ENCODE measurements at regions of chr10 and their contacts with region 1.

Region 1: GRCh38 chr10:52313933-52314816 is at the start of gene DKK1:
- DNase-seq: peak; percentile 87
- H3K4me3 ChIP-seq: peak within 1 kb of the TSS; percentile 90 to 99 (median 91)
- H3K27ac ChIP-seq: peak within 1 kb of the TSS; percentile 77
- H3K4me1 ChIP-seq: peaks cover 29% of the 10 kb centered on the region
- H3K27me3 ChIP-seq: no peaks in the 10 kb centered on the region
- CTCF ChIP-seq: peak; percentile 64 to 90
- total RNA-seq, gene DKK1: 157 to 161 TPM

Region 2: GRCh38 chr10:52387744-52388143 is 73.6 kb after region 1 on chr10:
- CTCF ChIA-PET with region 1: no interaction called
- dilution Hi-C with region 1: no loop called
- in situ Hi-C with region 1: no loop called
- intact Hi-C with region 1: loop called (anchors 2 kb)
- DNase-seq: peak; percentile 85
- H3K4me3 ChIP-seq: no peak overlapping the region
- H3K27ac ChIP-seq: peak overlapping the region; percentile 30
- H3K4me1 ChIP-seq: peaks cover 35% of the 10 kb centered on the region
- H3K27me3 ChIP-seq: no peaks in the 10 kb centered on the region
- CTCF ChIP-seq: no peak

Region 3: DNA sequence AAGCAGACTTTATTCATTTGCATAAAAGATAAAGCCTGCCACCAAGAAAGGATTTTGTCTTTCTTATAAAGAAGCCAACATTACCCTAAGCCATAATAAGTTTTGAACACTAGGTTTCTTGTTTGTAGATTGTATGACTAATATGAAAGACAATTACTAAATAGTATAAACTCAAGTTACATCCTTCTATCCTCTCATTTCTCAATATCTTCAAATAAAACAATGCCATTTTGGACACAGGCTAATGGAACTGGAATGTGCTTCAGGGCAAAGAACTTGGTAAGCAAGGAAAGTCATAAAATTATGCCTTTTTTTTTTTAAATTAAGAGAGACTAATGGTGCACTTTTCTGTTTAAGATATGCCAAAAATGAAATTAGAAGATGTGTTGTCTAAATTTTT is 137.6 kb after region 1 on chr10:
- CTCF ChIA-PET with region 1: interaction called, 3 read pairs
- dilution Hi-C with region 1: no loop called
- in situ Hi-C with region 1: no loop called
- intact Hi-C with region 1: loop called (anchors 1 kb)
- DNase-seq: peak; percentile 88
- H3K4me3 ChIP-seq: peak overlapping the region in 2 of 3 experiments; percentile 24 to 56
- H3K27ac ChIP-seq: peak overlapping the region; percentile 94
- H3K4me1 ChIP-seq: peaks cover 70% of the 10 kb centered on the region
- H3K27me3 ChIP-seq: no peaks in the 10 kb centered on the region
- CTCF ChIP-seq: no peak

Region 4: DNA sequence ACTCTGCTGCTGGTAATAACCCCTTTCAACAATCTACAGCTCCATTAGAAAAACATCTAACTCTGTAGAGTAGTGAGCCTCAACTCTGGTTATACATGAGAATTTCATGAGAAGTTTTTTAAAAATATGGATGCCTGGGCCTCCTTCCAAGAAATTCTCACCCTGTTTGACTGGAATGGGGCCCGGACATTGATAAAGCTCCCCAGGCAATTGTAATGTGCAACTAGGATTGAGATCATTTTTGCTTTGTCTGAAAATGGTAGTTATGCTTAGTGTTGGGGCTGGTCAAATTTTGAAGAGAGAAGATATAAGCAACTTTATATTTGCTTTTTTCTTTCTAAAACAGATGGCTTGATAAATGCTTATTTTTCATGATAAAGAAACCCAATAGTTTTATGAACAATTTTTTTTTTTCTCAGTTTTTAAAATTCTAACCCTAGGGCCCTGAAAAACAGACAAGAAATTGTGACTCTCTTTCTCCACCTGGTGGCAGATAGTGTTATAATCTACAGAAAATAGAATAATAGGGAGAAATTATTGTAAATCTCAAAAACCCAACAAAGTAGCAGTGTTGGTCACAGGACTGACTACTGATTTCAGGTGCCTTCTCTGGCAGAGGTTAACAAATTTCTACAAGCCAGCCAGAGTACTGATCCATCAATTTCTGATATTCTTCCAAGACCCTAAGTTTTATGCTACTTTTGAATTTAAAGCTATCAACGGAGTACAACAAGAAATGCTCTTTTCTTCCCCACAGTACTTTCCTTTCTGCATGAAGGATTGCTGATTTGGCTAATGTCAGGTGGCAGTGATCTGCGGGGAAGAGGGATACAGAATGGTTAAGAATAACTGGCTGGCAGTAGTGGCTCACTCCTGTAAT is 174.7 kb after region 1 on chr10:
- CTCF ChIA-PET with region 1: interaction called, 16 read pairs
- dilution Hi-C with region 1: no loop called
- in situ Hi-C with region 1: loop called (anchors 5 kb)
- intact Hi-C with region 1: loop called (anchors 1 kb)
- DNase-seq: peak; percentile 36
- H3K4me3 ChIP-seq: no peak overlapping the region
- H3K27ac ChIP-seq: peak overlapping the region; percentile 95
- H3K4me1 ChIP-seq: peaks cover 31% of the 10 kb centered on the region
- H3K27me3 ChIP-seq: no peaks in the 10 kb centered on the region
- CTCF ChIP-seq: peak; percentile 33 to 55

Region 5: DNA sequence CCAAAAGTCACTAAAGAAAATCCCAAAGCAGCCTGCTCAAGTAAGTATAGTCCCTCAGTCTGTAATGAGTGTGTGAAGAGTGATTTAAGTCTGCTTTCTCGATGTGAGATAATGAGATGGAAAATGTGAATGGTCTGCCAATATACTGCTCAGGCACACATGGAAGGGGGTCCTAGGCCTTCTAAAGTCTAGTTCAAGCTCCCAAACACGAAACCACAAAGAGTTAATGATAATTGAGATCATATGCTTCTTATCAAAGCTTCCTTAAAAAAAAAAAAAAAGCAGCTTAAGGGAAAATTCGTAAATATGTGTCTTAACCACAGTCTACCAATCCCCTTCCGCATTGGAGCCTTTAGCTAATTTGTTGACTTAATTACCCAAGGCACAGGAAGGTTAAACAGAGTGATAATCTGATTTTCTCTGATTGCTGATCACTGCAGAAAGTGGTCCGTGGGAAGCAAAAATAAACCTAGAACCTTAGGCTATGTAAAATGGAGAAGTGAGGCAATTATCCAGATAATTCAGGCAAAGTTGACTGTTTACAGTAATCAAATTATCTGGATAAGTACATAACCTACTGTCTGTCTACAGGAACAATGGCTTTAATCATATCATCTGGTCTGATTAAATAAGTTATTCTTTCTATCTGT is 285.5 kb after region 1 on chr10:
- CTCF ChIA-PET with region 1: interaction called, 20 read pairs
- dilution Hi-C with region 1: no loop called
- in situ Hi-C with region 1: no loop called
- intact Hi-C with region 1: no loop called
- DNase-seq: no peak
- H3K4me3 ChIP-seq: no peak overlapping the region
- H3K27ac ChIP-seq: no peak overlapping the region
- H3K4me1 ChIP-seq: no peaks in the 10 kb centered on the region
- H3K27me3 ChIP-seq: no peaks in the 10 kb centered on the region
- CTCF ChIP-seq: no peak

Region 6: GRCh38 chr10:52615756-52616394 is 301.7 kb after region 1 on chr10:
- CTCF ChIA-PET with region 1: no interaction called
- dilution Hi-C with region 1: no loop called
- in situ Hi-C with region 1: no loop called
- intact Hi-C with region 1: no loop called
- DNase-seq: no peak
- H3K4me3 ChIP-seq: no peak overlapping the region
- H3K27ac ChIP-seq: no peak overlapping the region
- H3K4me1 ChIP-seq: no peaks in the 10 kb centered on the region
- H3K27me3 ChIP-seq: no peaks in the 10 kb centered on the region
- CTCF ChIP-seq: no peak